K562 (cell line): ENCODE measurements at regions of chr6 and their contacts with region 1.

Region 1: GRCh38 chr6:158231551-158232315 is 63.6 kb downstream of the GTF2H5 start:
- DNase-seq: peak; percentile 84 to 97 (median 96)
- ATAC-seq: peak; percentile 68
- H3K4me3 ChIP-seq: peak overlapping the region; percentile 72
- H3K27ac ChIP-seq: peak overlapping the region; percentile 90
- H3K4me1 ChIP-seq: peaks cover 13 to 15% of the 10 kb centered on the region in 2 experiments; a peak in 4 of 5 replicates
- H3K27me3 ChIP-seq: no peaks in the 10 kb centered on the region
- CTCF ChIP-seq: no peak
- EP300 ChIP-seq: no peak
- POLR2A ChIP-seq: peak; percentile 62
- RAD21 ChIP-seq: no peak; a peak in 1 of 4 replicates

Region 2: GRCh38 chr6:158361961-158362669 is 130.4 kb after region 1 on chr6:
- CTCF ChIA-PET with region 1: no interaction called
- POLR2A ChIA-PET with region 1: no interaction called
- in situ Hi-C with region 1: no loop called
- intact Hi-C with region 1: loop called (anchors 10 kb)
- DNase-seq: no peak
- ATAC-seq: no peak
- H3K4me3 ChIP-seq: no peak overlapping the region
- H3K27ac ChIP-seq: no peak overlapping the region
- H3K4me1 ChIP-seq: peaks cover 0 to 10% of the 10 kb centered on the region in 2 experiments; a peak in 3 of 5 replicates
- H3K27me3 ChIP-seq: no peaks in the 10 kb centered on the region
- CTCF ChIP-seq: no peak
- EP300 ChIP-seq: no peak
- POLR2A ChIP-seq: no peak
- RAD21 ChIP-seq: no peak

Region 3: GRCh38 chr6:159720708-159721107 is 1489.0 kb after region 1 on chr6:
- CTCF ChIA-PET with region 1: no interaction called
- POLR2A ChIA-PET with region 1: no interaction called
- in situ Hi-C with region 1: no loop called
- intact Hi-C with region 1: no loop called
- DNase-seq: peak; percentile 51 to 67 (median 55)
- ATAC-seq: peak; percentile 42
- H3K4me3 ChIP-seq: no peak overlapping the region
- H3K27ac ChIP-seq: no peak overlapping the region
- H3K4me1 ChIP-seq: peaks cover 6 to 23% of the 10 kb centered on the region in 2 experiments
- H3K27me3 ChIP-seq: no peaks in the 10 kb centered on the region
- CTCF ChIP-seq: peak; percentile 21 to 59 (median 41); a peak in 4 of 6 replicates
- EP300 ChIP-seq: no peak
- POLR2A ChIP-seq: no peak
- RAD21 ChIP-seq: peak; percentile 17 to 18; a peak in 1 of 4 replicates